CD14-positive monocyte (primary cell): ENCODE measurements at regions of chr19 and their contacts with region 1.

Region 1: DNA sequence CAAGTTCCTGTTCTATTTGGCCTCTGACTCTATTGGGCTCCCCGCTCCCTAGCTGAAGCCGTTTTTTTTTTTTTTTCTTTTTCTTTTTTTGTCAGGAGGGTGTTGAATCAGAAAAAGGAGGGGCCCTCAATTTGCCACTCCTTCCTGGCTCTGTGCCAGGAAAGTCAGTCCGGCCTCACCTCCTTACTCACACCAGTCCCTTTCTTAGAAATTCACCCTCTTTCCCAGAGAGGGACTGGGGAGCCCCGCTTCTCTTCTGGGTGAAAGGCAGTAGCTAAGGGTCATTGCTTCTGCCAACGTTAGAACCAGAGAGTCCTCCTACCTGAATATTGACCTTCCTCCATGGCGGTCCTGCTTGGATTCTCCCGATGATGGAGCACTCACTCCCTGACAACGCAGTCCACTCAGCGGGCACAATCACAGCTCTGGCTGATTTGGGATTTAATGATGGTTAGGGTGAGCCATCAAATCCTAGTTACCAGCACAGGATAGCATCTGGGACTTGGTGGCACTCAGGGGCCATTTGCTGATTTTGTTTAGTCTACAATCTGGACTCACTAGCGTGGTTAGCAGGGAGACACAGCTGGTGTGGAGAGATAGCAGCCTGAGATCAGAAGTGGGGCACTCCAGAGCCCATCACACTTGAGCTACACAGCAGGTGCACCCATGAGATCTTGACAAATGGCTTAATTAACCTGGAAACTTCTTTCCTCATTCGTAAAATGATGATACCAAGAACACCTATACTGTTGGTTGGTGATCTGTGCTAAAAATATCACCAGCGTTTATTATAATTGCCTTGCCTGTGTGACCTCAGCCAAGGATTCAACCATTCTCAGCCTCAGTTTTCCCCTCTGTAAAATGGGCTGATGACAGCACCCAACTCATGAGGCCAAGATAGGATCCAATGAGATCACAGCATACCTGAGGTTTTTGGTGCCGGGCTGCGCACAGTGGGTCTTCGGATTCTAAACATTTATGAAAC is 2.2 kb downstream of the FCER2 start:
- DNase-seq: peak; percentile 47 to 70 (median 61)
- H3K4me3 ChIP-seq: no peak overlapping the region
- H3K4me3 Mint-ChIP-seq: peak overlapping the region; percentile 25 to 86
- H3K27ac ChIP-seq: no peak overlapping the region
- H3K27ac Mint-ChIP-seq: peak overlapping the region in 5 of 7 donors; percentile 54 to 89 (median 86)
- H3K4me1 ChIP-seq: peaks cover 54 to 61% of the 10 kb centered on the region in 2 donors
- H3K4me1 Mint-ChIP-seq: peaks cover 58% of the 10 kb centered on the region
- H3K27me3 ChIP-seq: no peaks in the 10 kb centered on the region
- H3K27me3 Mint-ChIP-seq: peaks cover 4 to 10% (median 4%) of the 10 kb centered on the region in 3 donors
- CTCF ChIP-seq: no peak

Region 2: GRCh38 chr19:7734220-7735203 is 34.8 kb after region 1 on chr19:
- intact Hi-C with region 1: loop called in 1 of 2 experiments (anchors 5 kb)
- DNase-seq: peak; percentile 71 to 89 (median 88)
- H3K4me3 ChIP-seq: peak overlapping the region in 1 of 3 experiments; percentile 53
- H3K4me3 Mint-ChIP-seq: peak overlapping the region in 1 of 2 donors; percentile 84
- H3K27ac ChIP-seq: peak overlapping the region; percentile 58 to 86
- H3K27ac Mint-ChIP-seq: peak overlapping the region; percentile 86 to 93 (median 90)
- H3K4me1 ChIP-seq: peaks cover 48 to 66% of the 10 kb centered on the region in 2 donors
- H3K4me1 Mint-ChIP-seq: peaks cover 57% of the 10 kb centered on the region
- H3K27me3 ChIP-seq: peaks cover 0 to 3% of the 10 kb centered on the region in 2 donors
- H3K27me3 Mint-ChIP-seq: peaks cover 2 to 19% (median 17%) of the 10 kb centered on the region in 3 donors
- CTCF ChIP-seq: no peak

Region 3: DNA sequence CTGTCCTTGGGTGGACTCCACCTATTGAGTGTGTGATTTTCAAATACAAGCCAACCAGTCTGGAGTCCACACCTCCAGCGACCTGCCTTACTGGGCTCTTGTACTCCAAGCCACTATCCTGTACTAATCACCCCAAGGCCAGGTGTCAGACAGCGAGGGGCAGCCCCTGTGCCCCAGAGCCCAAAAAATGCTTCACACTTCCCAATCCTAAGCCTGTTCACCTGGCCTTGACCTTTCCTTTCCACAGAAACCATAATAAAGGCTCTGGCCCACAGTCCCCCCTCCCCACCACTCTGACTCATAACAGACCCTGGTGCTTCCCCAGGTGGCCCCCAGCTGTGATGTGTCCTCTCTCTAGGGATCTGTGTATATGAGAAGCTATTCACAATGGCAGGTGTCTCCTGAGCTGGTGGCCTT is 43.7 kb after region 1 on chr19:
- intact Hi-C with region 1: loop called (anchors 5 kb)
- DNase-seq: no peak
- H3K4me3 ChIP-seq: no peak overlapping the region
- H3K4me3 Mint-ChIP-seq: no peak overlapping the region
- H3K27ac ChIP-seq: no peak overlapping the region
- H3K27ac Mint-ChIP-seq: no peak overlapping the region
- H3K4me1 ChIP-seq: peaks cover 39 to 40% of the 10 kb centered on the region in 2 donors
- H3K4me1 Mint-ChIP-seq: peaks cover 44% of the 10 kb centered on the region
- H3K27me3 ChIP-seq: no peaks in the 10 kb centered on the region
- H3K27me3 Mint-ChIP-seq: peaks cover 0 to 16% (median 6%) of the 10 kb centered on the region in 3 donors
- CTCF ChIP-seq: no peak